Sciatic nerve (tissue), 2 donors: ENCODE measurements at regions of chr21 and their contacts with region 1.

Region 1: GRCh38 chr21:37366482-37367316 is at the start of gene DYRK1A:
- DNase-seq: peak; percentile 99
- ATAC-seq: peak; percentile 99
- total RNA-seq, gene DYRK1A: 77.6 TPM

Region 2: GRCh38 chr21:37220981-37221664 is 145.6 kb before region 1 on chr21:
- intact Hi-C with region 1: loop called (anchors 10 kb)
- DNase-seq: peak; percentile 98
- ATAC-seq: peak; percentile 99

Region 3: DNA sequence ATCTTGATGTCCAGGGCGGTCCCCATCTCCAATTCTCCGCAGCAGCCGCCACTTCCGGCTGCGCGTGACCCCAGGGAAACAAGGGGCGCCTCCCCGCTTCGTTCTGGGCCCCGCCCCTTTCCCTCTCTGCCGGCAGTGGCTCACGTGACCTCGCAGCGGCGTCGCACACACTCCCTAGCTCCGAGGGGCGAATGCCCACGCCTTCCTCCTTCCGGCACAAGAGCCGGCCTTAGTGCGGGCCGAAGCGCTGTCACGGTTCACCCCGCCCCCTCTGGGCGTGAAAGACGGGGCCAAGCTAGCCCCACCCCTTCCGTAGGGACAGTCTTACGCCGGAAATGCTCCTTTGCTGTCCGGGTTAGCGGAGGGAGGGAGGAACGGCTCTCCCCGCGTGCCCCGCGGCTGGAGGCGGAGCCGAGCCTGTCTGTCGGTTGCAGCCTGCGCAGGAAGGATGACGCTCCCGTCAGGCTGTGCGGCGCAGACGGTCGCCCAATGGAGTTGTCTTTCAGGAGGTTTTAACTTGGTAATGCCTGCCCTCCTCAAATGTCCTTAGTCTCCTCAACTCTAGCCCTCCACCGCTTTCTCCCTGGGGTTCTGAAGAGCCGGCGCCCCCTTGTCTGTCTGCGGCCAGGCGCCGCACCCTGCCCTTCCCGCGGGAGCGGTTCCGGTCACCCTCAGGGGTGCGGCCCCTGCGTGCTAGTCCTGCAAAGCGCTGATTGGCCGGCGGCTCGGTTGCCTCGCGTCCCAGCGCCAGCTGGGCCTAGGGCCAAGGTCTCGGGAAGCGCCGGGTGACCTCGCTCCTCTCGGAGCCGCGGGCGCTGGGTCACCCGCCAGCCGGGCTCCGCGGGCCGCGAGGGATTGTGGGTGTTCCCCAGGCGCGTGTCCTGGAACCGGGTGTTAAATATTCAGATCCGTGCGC is 99.2 kb before region 1 on chr21 and contains the start of gene VPS26C:
- intact Hi-C with region 1: loop called (anchors 10 kb)
- DNase-seq: peak; percentile 99
- ATAC-seq: peak; percentile 99
- total RNA-seq, gene VPS26C: 48.8 TPM

Region 4: GRCh38 chr21:37565530-37566223 is 199.0 kb after region 1 on chr21:
- intact Hi-C with region 1: loop called (anchors 5 kb)
- DNase-seq: no peak
- ATAC-seq: no peak